Activated CD4-positive, alpha-beta T cell treated with anti-CD3 and anti-CD28 coated beads, Interleukin-2, amount 10 ng/mL, durations not matched to agents 24 days and 14 days (primary cell): ENCODE measurements at regions of chr1 and their contacts with region 1.

Region 1: DNA sequence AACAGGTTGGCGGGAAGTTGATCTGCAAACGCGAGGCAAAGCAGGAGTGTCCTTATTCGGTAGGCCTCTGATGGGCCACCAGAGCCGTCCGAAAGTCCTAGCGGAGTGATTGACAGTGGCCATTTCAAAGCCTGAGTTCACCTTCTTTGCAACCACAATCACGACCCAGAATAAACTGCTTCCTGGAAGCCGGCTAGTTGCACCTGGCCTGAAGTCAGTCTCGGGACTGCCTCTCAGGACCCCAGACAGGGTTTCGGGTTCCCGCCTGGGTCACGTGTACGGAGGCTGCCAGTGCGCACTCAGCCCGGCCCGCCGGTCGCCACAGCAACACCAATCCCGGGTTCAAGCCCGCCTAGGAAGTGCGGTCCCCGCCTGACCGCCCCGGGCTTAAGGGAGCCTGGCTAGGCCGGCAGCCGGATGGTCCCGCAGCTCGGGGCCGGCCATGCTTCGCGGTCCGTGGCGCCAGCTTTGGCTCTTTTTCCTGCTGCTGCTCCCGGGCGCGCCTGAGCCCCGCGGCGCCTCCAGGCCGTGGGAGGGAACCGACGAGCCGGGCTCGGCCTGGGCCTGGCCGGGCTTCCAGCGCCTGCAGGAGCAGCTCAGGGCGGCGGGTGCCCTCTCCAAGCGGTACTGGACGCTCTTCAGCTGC is at the start of gene TOR3A:
- DNase-seq: peak; percentile 95
- H3K4me3 Mint-ChIP-seq: peak within 1 kb of the TSS; percentile 95
- H3K27ac Mint-ChIP-seq: peak within 1 kb of the TSS; percentile 96
- H3K4me1 Mint-ChIP-seq: peaks cover 25% of the 10 kb centered on the region
- H3K27me3 Mint-ChIP-seq: no peaks in the 10 kb centered on the region
- total RNA-seq, gene TOR3A: 41.6 and 44.3 TPM in 2 replicates

Region 2: DNA sequence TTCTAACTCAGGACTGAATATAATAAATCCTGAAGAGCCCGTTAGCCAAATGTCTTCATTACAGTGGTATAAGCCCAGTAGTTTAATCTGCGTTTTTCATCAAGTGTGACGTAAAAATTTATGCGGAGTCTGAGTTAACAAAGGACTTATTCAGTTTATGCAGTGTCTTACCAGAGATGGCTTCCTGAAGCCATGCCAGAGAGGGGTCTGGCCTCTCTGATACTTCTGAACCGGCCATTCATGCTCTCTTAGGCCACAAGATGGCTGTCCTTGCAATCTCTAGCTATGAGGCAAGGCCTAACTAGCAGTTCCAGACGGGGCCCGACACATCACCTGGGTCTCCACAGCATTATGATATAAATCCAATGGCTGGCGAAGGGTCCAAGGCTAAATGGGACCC is 467.5 kb before region 1 on chr1:
- intact Hi-C with region 1: no loop called
- DNase-seq: no peak
- H3K4me3 Mint-ChIP-seq: no peak overlapping the region
- H3K27ac Mint-ChIP-seq: no peak overlapping the region
- H3K4me1 Mint-ChIP-seq: no peaks in the 10 kb centered on the region
- H3K27me3 Mint-ChIP-seq: no peaks in the 10 kb centered on the region

Region 3: GRCh38 chr1:179025125-179025974 is 56.5 kb before region 1 on chr1 and contains the start of gene FAM20B:
- intact Hi-C with region 1: loop called (anchors 2 kb)
- DNase-seq: peak; percentile 97
- H3K4me3 Mint-ChIP-seq: peak within 1 kb of the TSS; percentile 89
- H3K27ac Mint-ChIP-seq: peak within 1 kb of the TSS; percentile 86
- H3K4me1 Mint-ChIP-seq: peaks cover 37% of the 10 kb centered on the region
- H3K27me3 Mint-ChIP-seq: peaks cover 17% of the 10 kb centered on the region
- total RNA-seq, gene FAM20B: 40.4 and 45.2 TPM in 2 replicates

Region 4: DNA sequence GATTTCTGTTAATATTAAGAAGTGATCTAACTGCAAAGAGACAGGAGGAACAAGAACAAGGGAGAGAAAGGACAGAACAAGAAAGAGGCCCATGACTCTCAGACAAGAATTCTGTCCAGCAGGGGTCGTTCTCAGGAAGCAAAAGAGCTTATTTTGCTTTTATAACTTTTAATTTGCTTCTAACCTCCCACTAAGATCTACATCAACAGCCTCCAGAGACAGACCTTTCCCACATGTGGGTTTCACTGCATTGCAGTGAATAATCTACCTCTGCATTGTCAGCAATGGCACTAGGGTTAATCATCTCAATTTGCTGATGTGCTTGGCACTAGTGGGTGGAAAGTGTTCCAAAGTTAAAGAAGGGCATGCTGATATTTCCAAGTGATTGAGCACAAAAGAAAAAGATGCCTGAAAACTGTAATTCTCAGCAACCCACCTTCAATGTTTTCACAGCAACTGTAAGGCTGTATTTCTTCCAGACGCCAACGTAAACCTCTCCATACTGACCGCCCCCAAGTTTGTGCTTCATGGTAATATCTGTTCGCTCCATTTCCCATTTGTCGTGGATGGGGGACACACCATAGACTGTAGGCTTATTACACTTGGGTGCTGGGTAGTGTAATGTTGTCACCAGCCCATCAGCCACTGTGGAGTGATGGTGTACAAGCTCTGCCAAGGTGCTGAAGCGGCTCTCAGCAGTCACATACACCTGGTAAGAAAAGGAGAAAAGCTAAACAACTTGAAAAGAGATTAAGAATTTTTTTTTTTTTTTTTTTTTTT is 39.5 kb after region 1 on chr1:
- intact Hi-C with region 1: loop called (anchors 2 kb)
- DNase-seq: peak; percentile 83
- H3K4me3 Mint-ChIP-seq: no peak overlapping the region
- H3K27ac Mint-ChIP-seq: no peak overlapping the region
- H3K4me1 Mint-ChIP-seq: peaks cover 6% of the 10 kb centered on the region
- H3K27me3 Mint-ChIP-seq: no peaks in the 10 kb centered on the region

Region 5: DNA sequence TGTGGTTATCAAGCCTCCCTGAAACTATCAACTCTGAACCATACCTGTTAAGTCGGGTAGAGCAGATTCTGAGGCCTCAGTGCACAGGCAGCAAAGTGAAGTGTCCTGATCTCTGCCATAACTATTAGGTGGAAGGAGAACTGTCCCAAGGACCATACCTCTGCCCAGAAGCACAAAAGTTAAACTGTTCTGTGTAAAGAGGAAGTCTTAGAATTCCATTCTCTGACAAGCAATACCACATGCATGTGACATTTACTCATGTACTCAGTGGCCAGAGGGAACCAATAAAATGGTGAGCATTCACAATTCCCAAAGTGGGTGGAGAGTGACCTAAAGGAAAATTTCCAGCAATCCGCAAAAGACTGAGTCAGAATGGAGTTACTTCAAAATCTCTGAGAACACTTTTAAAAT is 61.1 kb after region 1 on chr1:
- intact Hi-C with region 1: loop called (anchors 5 kb)
- DNase-seq: no peak
- H3K4me3 Mint-ChIP-seq: peak overlapping the region; percentile 63
- H3K27ac Mint-ChIP-seq: peak overlapping the region; percentile 81
- H3K4me1 Mint-ChIP-seq: peaks cover 30% of the 10 kb centered on the region
- H3K27me3 Mint-ChIP-seq: no peaks in the 10 kb centered on the region

Region 6: DNA sequence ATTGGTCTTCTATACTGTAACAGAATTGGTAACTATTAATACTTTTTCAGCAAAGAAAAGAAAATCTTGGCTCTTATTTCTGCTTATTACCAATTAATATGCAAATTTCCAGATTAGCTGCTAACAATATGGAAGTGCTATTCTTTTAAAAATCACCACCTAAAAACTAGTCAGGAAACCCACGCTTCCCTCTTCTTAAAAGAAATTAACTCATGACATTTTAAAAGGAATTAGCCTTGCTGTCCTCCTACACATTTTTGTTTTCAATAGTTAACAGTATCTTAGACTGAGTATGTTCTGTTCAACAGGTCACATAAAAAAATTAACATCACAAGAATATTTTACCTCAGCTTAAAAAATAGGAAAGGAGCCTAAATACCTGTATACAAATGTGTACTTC is 120.4 kb after region 1 on chr1:
- intact Hi-C with region 1: no loop called
- DNase-seq: no peak
- H3K4me3 Mint-ChIP-seq: no peak overlapping the region
- H3K27ac Mint-ChIP-seq: no peak overlapping the region
- H3K4me1 Mint-ChIP-seq: peaks cover 13% of the 10 kb centered on the region
- H3K27me3 Mint-ChIP-seq: no peaks in the 10 kb centered on the region

Region 7: GRCh38 chr1:179229214-179230140 is 147.7 kb after region 1 on chr1 and contains the start of gene ABL2:
- intact Hi-C with region 1: loop called (anchors 2 kb)
- DNase-seq: peak; percentile 88
- H3K4me3 Mint-ChIP-seq: peak within 1 kb of the TSS; percentile 90
- H3K27ac Mint-ChIP-seq: peak within 1 kb of the TSS; percentile 89
- H3K4me1 Mint-ChIP-seq: peaks cover 24% of the 10 kb centered on the region
- H3K27me3 Mint-ChIP-seq: peaks cover 4% of the 10 kb centered on the region
- total RNA-seq, gene ABL2: 9.9 and 11.1 TPM in 2 replicates

Region 8: DNA sequence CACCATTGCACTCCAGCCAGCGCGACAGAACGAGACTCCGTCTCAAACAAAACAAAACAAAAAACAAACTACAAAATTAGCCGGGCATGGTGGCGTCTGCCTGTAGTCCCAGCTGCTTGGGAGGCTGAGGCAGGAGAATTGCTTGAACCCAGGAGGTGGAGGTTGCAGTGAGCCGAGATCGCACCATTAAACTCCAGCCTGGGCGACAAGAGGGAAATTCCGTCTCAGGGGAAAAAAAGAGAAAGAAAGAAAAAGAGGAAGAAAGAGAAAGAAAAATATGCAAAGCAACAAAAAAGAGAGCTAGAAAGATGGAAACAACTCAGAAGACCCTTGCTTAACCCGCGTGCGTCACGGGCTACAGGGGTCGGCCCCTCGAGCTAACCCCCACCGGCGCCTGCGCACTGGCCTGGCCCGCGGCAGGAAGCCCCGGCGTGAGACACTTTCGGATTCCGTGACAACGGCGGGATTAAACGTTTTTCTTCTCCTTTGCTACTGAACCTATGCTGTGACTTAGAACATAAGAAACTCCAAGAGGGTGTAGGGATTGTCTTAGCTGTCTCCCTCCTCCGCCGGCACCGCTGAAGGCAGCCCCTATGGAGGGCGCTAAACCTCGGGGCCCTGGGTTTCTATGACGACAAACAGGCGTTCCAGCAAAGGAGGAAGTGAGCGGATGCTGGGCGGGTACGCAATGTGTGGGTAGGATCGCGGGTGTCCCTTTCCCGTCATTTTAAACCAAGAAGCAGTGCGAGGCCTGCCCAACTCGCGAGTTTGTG is 283.7 kb after region 1 on chr1 and contains the start of gene AXDND1:
- intact Hi-C with region 1: loop called (anchors 1 kb)
- DNase-seq: peak; percentile 96
- H3K4me3 Mint-ChIP-seq: peak within 1 kb of the TSS; percentile 96
- H3K27ac Mint-ChIP-seq: peak within 1 kb of the TSS; percentile 97
- H3K4me1 Mint-ChIP-seq: peaks cover 9% of the 10 kb centered on the region
- H3K27me3 Mint-ChIP-seq: peaks cover 4% of the 10 kb centered on the region
- total RNA-seq, gene AXDND1: 0.21 TPM in 1 of 2 replicates, not detected in the other